BJ (cell line): ENCODE measurements at regions of chr13 and their contacts with region 1.

Region 1: DNA sequence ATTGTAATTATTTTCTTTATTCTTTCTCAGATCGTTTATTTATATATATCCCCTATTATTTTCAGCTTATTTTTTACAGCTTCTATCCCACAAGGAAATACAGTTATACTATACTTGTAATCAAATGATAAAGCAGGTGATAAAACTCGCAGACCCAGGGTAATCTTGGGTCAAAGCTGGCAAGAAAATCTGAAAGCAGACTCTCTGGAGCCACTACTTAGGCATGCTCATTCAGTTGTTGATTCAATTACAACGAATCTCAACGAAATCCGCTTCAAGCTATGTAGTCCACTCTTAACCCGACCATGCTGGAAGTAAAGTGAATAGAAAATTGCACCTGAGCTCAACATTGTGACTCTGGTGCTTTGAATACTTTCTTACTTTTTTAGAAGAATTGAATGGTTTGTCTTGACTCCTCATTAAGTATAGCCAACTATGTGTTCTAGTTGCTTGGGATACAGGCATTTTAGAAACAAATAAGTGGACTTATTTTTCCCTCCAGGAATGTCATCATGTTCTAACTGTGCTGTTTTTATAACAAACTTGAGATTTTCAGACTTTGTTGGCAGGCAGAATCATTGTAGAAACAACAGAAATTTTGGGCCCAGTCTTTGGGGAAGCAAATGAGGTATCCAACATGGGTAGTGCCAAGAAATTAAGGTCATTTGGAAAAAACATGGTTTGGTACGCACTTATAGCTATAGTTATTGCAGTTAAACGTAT is 21.4 kb downstream of the ESD start:
- DNase-seq: no peak
- H3K4me3 ChIP-seq: no peak overlapping the region
- H3K27me3 ChIP-seq: no peaks in the 10 kb centered on the region
- CTCF ChIP-seq: no peak

Region 2: DNA sequence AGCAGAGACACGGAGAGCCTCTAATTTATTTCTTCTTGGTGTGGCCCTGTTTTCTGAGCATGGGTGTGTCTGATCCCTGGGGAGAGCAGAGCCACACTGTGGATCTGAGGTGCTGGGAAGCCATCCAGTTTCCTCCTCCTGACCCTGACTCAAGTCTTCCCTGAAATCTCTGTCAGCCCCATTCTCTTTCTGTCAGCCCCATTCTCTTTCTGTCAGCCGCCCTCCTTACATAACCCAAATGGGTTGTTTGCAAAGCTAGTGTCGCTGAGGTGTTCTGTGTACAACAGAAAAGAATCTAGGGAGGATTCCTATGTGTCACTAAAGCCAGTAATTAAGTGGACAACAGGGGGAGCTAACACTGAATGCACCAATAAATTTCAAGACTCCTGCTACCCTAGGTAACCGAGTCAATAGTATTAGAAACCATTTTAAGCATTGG is 172.4 kb before region 1 on chr13:
- CTCF ChIA-PET with region 1: no interaction called
- POLR2A ChIA-PET with region 1: no interaction called
- DNase-seq: no peak
- H3K4me3 ChIP-seq: no peak overlapping the region
- H3K27me3 ChIP-seq: no peaks in the 10 kb centered on the region
- CTCF ChIP-seq: peak; percentile 20; the same call in 1 of the 2 replicates

Region 3: GRCh38 chr13:46759846-46760245 is 15.7 kb before region 1 on chr13:
- CTCF ChIA-PET with region 1: interaction called, 12 read pairs
- POLR2A ChIA-PET with region 1: no interaction called
- DNase-seq: no peak
- H3K4me3 ChIP-seq: no peak overlapping the region
- H3K27me3 ChIP-seq: peaks cover 6% of the 10 kb centered on the region
- CTCF ChIP-seq: no peak